ENCODE measurements at regions of chrX and their contacts with region 1.

Region 1: DNA sequence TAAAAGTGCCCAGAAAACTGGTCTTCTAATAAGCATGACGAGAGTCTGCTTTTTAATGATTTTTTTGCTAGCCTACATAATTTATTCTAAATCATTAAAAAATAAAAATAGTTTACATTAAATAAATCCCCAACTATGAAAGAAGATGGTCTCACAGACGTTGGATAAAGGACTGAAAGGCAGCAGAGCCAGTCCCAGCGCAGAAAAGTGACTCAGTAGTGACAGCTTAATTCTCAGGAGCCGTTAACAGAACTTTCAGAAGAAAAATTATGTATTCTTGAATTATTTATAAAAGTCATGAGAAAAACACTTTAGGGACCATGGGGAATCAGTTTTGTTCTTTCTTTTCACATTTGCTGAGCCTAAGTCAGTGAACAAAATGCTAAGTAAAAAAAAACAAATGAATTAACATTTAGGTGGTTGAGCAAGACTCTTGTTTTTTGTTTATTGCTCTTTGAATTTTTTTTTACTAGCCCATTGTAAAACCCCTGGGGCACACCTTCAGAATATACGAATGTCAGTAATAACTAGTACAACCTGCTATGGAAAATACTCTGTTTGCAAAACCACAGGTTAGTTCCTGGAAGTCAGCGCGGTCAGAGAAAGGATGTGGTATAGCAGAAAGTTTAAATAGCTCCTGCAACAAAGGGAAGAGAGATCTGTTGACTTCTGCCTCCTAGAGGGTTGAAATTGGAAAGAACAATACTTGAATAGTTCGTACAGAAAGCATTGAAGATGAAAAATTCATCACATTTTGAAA is 50.4 kb upstream of the CCDC160 start:
- DNase-seq: peak; percentile 87
- ATAC-seq: peak; percentile 88
- H3K4me3 Mint-ChIP-seq: peak overlapping the region; percentile 71
- H3K27ac Mint-ChIP-seq: peak overlapping the region; percentile 65
- H3K4me1 Mint-ChIP-seq: peaks cover 25% of the 10 kb centered on the region
- H3K27me3 Mint-ChIP-seq: no peaks in the 10 kb centered on the region

Region 2: GRCh38 chrX:134101636-134102035 is 84.9 kb before region 1 on chrX:
- CTCF ChIA-PET with region 1: no interaction called
- DNase-seq: no peak
- ATAC-seq: no peak
- H3K4me3 Mint-ChIP-seq: no peak overlapping the region
- H3K27ac Mint-ChIP-seq: no peak overlapping the region
- H3K4me1 Mint-ChIP-seq: no peaks in the 10 kb centered on the region
- H3K27me3 Mint-ChIP-seq: no peaks in the 10 kb centered on the region

Region 3: DNA sequence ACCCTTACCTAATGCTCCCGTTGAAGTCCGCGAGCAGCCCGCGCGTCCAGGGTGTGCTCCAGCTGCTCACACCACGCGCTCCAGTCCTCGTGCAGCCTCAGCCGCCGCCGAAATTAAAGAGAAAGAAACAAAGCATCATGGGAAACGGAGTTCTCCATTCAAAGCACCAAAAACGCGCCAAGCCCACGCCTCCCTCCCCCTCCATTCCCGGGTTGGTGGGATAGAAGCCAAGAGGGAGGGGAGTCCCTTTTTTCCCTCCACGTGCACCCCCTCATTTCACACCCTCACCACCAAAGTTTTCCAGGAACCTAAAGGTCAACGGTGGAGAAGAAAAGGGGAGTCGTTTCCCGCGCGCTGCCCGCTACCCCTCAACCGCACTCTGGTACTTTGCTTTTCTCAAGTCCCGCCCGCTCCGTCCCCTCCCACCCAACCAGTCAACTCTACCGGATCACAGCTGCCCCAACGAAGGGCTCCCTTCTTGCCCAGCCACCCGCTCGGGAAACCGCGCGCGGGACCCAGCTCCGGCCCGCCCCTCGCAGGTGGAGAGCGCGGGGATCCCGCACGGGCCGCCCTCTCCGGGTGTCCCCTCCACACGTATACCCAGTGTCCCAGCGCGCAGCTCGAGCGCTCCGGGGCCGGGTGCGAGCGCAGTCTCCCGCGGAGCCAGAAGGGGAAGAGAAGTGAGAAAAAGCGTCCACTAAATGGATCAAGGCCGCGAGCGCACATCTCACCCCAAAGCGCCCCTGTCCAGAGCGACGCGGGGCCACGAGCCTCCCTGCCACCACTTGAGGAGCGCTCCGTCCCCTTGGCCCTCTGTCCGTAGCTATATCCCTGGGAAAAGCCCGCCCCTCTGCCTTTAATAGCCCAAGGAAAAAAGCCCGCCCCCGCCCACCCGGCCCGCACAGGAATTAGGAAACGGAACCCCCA is 14.6 kb before region 1 on chrX:
- CTCF ChIA-PET with region 1: interaction called, 18 read pairs
- DNase-seq: peak; percentile 55
- ATAC-seq: peak; percentile 64
- H3K4me3 Mint-ChIP-seq: peak overlapping the region; percentile 83
- H3K27ac Mint-ChIP-seq: peak overlapping the region; percentile 79
- H3K4me1 Mint-ChIP-seq: peaks cover 16% of the 10 kb centered on the region
- H3K27me3 Mint-ChIP-seq: peaks cover 19% of the 10 kb centered on the region

Region 4: DNA sequence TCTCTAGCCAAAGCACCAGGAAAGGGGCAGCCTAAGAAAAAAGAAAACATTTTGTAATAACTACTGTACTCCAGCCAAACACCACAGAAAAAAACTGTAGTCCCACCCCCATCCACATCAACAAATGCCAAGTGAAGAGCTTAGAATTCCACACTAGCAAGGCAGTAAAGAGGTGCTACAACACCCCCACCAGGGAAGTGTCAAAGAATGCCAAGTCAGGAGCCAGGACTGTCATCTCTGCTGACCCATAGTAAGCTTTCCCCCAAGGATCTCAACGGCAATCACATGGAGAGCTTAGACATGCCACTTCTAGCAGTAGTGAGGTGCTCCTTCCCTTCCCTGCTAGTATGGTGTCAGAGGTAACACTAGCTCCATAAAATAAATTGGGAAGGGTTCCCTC is 16.0 kb after region 1 on chrX:
- CTCF ChIA-PET with region 1: no interaction called
- DNase-seq: no peak
- ATAC-seq: no peak
- H3K4me3 Mint-ChIP-seq: no peak overlapping the region
- H3K27ac Mint-ChIP-seq: no peak overlapping the region
- H3K4me1 Mint-ChIP-seq: no peaks in the 10 kb centered on the region
- H3K27me3 Mint-ChIP-seq: no peaks in the 10 kb centered on the region